ENCODE measurements at regions of chr18 and their contacts with region 1.

Region 1: GRCh38 chr18:76405681-76406356 is 89.2 kb downstream of the ZNF516 start:
- DNase-seq: peak in 2 of 4 donors; percentile 41 to 86
- ATAC-seq: peak; percentile 66
- H3K4me3 ChIP-seq: no peak overlapping the region
- H3K27ac ChIP-seq: no peak overlapping the region
- H3K4me1 ChIP-seq: peaks cover 0 to 49% of the 10 kb centered on the region in 2 donors
- H3K27me3 ChIP-seq: no peaks in the 10 kb centered on the region
- CTCF ChIP-seq: peak; percentile 54 to 64

Region 2: DNA sequence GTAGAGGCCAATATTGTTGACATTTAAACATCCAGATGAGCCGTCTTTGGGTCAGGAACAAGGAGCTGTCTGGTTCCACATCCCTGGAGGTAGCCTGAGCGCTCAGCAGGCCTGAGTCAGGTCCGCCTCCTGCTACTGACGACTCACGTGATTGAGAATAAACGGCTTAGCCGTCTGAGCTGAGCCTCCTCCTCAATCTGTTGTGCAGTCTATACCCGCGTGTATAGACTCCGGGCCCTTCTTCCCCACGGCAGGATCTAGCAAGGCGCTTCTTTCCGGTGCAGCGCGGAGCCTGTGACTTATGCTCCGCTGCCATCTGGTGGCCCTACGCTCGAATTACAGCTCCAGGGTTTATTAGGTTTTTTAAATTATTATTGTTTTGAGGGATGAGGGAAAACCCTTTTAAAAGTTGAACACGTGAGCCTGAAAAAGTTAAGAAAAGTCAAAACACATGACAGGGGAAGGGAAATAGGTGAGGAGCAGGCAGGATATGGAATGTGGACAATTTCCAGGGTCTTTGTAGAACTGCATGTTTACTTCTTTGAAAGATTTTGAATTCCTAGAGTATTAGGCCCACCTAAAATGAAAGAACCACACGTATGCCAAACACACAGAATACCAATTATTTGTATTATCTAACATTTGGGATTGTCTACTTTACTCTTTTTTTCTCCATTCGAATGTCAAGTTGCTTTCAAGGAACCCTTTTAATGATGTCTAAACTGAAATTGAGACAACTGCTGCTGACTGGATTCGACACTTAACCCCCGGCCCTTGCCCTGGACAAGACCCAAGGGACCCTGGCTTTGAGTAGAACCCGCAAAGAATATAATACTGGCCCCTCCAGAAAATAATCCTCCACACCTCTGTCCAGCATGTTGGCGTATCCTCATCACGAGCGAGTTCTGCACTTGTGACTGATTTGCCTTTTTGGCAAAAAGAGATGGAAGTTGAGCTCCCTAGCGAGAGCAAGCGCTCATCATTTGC is 304.1 kb after region 1 on chr18:
- intact Hi-C with region 1: loop called in 1 of 2 experiments (anchors 5 kb)
- DNase-seq: peak; percentile 58 to 87 (median 75)
- ATAC-seq: peak; percentile 98
- H3K4me3 ChIP-seq: no peak overlapping the region
- H3K27ac ChIP-seq: no peak overlapping the region
- H3K4me1 ChIP-seq: peaks cover 0 to 5% of the 10 kb centered on the region in 2 donors
- H3K27me3 ChIP-seq: no peaks in the 10 kb centered on the region
- CTCF ChIP-seq: peak; percentile 74 to 86